Activated CD8-positive, alpha-beta T cell treated with anti-CD3 and anti-CD28 coated beads, Interleukin-2, amount 10 ng/mL, durations not matched to agents 7 days and 5 days (primary cell): ENCODE measurements at regions of chr22 and their contacts with region 1.

Region 1: DNA sequence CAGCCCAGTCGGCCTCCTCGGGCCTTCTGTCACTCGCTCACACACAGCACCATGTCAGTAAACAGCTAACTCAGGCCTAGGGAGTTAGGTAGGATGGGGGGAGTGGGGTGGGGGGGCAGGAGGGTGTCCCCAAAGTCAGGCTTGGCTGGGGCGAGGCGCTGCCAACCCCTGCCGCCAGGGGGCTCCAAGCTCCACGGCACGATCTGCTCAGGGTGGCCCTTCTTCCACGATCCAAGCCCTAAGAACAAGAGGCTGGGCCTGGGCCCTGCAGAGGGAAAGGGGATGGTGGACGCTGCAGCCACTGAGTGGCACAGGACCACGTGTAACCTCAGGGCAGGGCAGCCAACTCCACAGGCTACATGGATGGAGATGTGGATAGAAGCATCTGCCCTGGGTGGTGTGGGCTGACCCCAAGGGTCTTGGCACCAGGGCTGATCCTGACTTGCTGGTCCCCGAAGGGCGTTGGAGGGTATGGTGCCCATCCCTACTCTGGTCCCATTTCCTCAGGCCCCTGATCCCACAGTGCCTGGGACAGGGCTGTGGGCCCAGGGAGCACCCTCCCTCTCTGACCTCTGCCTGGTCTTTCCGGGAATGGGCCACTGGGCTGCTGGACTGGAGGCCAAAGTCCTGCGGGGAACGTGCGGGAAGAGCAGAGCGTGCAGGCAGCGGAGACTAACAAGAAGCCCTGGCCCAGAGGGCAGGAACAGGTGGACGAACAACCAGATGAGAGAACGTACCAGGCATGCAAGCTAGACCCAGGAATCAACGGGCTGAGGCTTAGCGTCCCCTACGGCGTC is 29.1 kb upstream of the TXNRD2 start:
- DNase-seq: peak; percentile 81
- ATAC-seq: peak; percentile 76
- H3K4me3 Mint-ChIP-seq: no peak overlapping the region
- H3K27ac Mint-ChIP-seq: no peak overlapping the region
- H3K4me1 Mint-ChIP-seq: peaks cover 27% of the 10 kb centered on the region
- H3K27me3 Mint-ChIP-seq: no peaks in the 10 kb centered on the region

Region 2: GRCh38 chr22:19941365-19942082 is 29.2 kb before region 1 on chr22 and contains the starts of genes COMT and TXNRD2:
- CTCF ChIA-PET with region 1: no interaction called
- POLR2A ChIA-PET with region 1: no interaction called
- DNase-seq: peak; percentile 81
- ATAC-seq: peak; percentile 94
- H3K4me3 Mint-ChIP-seq: peak within 1 kb of the TSS; percentile 95
- H3K27ac Mint-ChIP-seq: peak within 1 kb of the TSS; percentile 96
- H3K4me1 Mint-ChIP-seq: peaks cover 40% of the 10 kb centered on the region
- H3K27me3 Mint-ChIP-seq: no peaks in the 10 kb centered on the region
- total RNA-seq, gene COMT: 92.8 to 97.1 TPM
- total RNA-seq, gene TXNRD2: 16.1 to 19.3 TPM

Region 3: GRCh38 chr22:20013382-20013871 is 42.8 kb after region 1 on chr22:
- CTCF ChIA-PET with region 1: interaction called, 16 read pairs
- POLR2A ChIA-PET with region 1: no interaction called
- DNase-seq: peak; percentile 59
- ATAC-seq: no peak
- H3K4me3 Mint-ChIP-seq: no peak overlapping the region
- H3K27ac Mint-ChIP-seq: no peak overlapping the region
- H3K4me1 Mint-ChIP-seq: peaks cover 13% of the 10 kb centered on the region
- H3K27me3 Mint-ChIP-seq: peaks cover 25% of the 10 kb centered on the region

Region 4: DNA sequence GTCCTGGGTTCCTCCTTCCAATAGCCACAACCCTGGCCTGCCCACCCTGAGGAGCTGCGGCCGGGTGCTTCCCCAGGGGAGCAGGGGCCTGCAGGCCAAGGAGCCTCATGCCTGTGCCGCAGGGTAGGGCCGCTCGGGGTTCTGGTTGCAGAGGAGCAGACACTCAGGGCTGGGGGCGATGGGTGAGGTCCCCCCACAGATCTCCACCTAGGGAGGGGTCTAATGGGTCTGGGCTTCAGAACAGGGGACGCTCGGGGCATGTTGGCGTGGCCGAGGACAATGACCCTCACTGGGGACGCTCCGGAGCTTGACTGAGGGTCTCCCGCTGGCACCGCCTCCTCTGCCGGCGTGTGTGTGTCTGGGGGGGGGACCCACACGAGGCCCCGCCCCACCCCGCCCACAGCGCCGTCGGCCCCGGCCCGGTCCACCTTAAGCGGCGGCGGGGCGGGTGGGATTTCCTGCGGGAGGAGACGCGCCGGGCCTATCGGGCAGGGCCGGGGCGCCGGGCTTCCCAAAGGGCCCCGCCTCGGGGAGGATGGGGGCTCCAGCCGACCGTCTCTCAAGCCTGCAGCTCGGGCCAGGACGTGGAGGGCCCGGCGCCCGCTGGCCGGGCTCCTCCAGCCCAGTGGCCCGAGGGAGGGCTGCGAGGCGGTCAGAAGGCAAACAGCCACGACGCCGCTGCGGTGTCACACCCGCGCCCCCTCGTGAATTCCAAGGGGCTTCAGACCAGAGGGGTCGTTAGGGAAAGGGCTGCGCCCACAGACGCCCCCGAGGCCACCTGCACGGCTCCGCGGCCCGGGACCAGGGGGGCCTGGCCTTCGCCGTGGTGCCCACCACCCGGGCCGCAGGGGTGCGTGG is 160.3 kb after region 1 on chr22:
- CTCF ChIA-PET with region 1: interaction called, 19 read pairs
- POLR2A ChIA-PET with region 1: no interaction called
- DNase-seq: peak; percentile 74
- ATAC-seq: peak; percentile 69
- H3K4me3 Mint-ChIP-seq: peak overlapping the region; percentile 62
- H3K27ac Mint-ChIP-seq: peak overlapping the region; percentile 64
- H3K4me1 Mint-ChIP-seq: peaks cover 24% of the 10 kb centered on the region
- H3K27me3 Mint-ChIP-seq: no peaks in the 10 kb centered on the region

Region 5: DNA sequence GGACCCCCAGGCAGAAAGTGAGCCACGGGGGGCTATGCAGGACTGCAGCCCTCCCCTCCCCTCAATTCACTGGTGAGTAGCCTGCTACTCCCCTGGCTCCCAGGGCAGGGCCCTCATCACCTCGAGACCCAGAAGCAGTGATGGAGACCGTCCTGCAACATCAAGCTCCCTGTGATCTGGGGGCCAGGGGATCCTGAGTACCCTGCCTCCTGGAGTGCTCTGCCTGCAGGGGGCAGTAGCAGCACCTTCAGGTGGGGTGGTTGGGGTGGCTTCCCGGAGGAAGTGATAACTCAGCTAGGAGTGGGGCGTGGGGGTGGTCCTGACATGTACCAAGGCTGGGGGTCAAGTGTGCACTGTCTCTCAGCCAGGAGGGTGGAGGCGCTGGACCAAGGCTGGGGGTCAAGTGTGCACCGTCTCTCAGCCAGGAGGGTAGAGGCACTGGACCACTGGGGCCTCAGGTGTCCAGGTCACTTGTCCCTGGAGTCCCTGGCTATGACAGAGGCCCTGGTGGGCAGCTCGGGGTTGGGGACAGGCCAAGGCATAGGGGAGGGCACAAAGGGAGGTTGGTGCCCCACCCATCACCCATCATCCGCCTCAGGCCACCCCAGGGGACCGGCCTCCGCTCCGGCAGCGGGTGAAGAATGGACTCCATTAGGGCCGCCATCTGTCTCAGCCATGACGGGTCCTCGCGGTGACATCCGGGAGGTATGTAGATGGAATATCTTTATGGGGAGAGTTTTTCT is 288.1 kb after region 1 on chr22:
- CTCF ChIA-PET with region 1: no interaction called
- POLR2A ChIA-PET with region 1: no interaction called
- DNase-seq: peak; percentile 31
- ATAC-seq: no peak
- H3K4me3 Mint-ChIP-seq: no peak overlapping the region
- H3K27ac Mint-ChIP-seq: no peak overlapping the region
- H3K4me1 Mint-ChIP-seq: peaks cover 9% of the 10 kb centered on the region
- H3K27me3 Mint-ChIP-seq: no peaks in the 10 kb centered on the region